A549 (cell line): ENCODE measurements at regions of chr9 and their contacts with region 1.

Region 1: DNA sequence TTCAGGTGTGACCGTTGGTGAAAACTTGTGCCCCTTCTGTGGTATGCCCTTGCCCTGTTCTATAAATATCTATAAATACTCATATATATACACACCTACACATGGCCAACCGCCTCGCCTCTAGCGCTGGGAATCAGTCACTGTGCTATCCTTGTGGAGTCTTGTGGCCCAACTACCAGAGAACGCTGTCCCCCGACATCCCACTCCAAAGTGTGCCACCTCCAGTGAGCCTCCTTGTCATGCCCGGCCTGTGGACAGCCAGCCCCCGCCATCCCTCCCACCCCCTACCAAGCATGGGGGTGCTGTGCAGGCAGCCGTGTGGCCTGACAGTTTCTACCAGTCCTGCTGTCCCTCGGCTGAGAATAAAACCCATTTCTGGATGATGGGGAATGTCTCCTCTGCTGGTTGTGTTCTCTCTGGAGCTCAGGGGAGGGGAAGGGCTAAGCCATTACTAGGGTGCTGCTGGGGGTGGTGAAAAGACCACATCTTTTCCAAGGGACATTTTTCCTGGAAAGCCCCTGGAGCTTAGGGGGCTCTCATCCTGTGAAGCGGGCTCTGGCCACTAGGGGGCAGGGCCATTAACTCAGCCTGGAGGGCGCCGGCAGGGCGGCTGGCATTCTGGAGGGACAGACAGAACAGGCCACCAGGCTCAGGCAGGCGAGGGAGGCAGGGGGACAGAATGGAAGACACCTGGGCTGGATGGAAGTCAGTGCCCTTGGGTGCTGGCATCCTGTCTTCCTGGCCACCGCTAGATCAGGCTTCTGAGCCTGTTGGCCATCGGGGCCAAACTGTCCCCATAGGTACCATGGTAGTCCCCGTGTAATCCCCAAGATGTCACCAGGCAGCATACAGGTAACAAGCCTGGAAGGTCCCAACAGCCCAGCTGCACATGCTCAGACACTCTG is 20.7 kb downstream of the GOLGA2 start:
- DNase-seq: peak; percentile 61 to 88
- ATAC-seq: peak; percentile 33 to 79; a peak in 5 of 6 replicates
- H3K4me3 ChIP-seq: no peak overlapping the region
- H3K27ac ChIP-seq: 0 out of 6 replicates have a peak overlapping the region, but pooled peaks of 1 of the 2 experiments have one; percentile 29
- H3K4me1 ChIP-seq: no peaks in the 10 kb centered on the region
- CTCF ChIP-seq: peak; percentile 75
- EP300 ChIP-seq: no peak
- POLR2A ChIP-seq: no peak
- RAD21 ChIP-seq: peak; percentile 32 to 33; a peak in 4 of 5 replicates

Region 2: GRCh38 chr9:127770905-127771569 is 484.1 kb before region 1 on chr9:
- CTCF ChIA-PET with region 1: no interaction called
- POLR2A ChIA-PET with region 1: no interaction called
- DNase-seq: peak; percentile 86 to 98
- ATAC-seq: peak; percentile 92 to 98
- H3K4me3 ChIP-seq: peak overlapping the region; percentile 40
- H3K27ac ChIP-seq: peak overlapping the region in 1 of 2 experiments; percentile 54; a peak in 2 of 6 replicates
- H3K4me1 ChIP-seq: peaks cover 4% of the 10 kb centered on the region; the same call in 1 of the 3 replicates
- CTCF ChIP-seq: no peak
- EP300 ChIP-seq: no peak
- POLR2A ChIP-seq: no peak
- RAD21 ChIP-seq: no peak

Region 3: GRCh38 chr9:128244837-128245231 is 10.3 kb before region 1 on chr9:
- CTCF ChIA-PET with region 1: interaction called, 22 read pairs
- POLR2A ChIA-PET with region 1: interaction called, 4 read pairs
- DNase-seq: no peak
- ATAC-seq: no peak
- H3K4me3 ChIP-seq: no peak overlapping the region
- H3K27ac ChIP-seq: no peak overlapping the region
- H3K4me1 ChIP-seq: no peaks in the 10 kb centered on the region
- CTCF ChIP-seq: no peak
- EP300 ChIP-seq: no peak
- POLR2A ChIP-seq: no peak
- RAD21 ChIP-seq: no peak

Region 4: DNA sequence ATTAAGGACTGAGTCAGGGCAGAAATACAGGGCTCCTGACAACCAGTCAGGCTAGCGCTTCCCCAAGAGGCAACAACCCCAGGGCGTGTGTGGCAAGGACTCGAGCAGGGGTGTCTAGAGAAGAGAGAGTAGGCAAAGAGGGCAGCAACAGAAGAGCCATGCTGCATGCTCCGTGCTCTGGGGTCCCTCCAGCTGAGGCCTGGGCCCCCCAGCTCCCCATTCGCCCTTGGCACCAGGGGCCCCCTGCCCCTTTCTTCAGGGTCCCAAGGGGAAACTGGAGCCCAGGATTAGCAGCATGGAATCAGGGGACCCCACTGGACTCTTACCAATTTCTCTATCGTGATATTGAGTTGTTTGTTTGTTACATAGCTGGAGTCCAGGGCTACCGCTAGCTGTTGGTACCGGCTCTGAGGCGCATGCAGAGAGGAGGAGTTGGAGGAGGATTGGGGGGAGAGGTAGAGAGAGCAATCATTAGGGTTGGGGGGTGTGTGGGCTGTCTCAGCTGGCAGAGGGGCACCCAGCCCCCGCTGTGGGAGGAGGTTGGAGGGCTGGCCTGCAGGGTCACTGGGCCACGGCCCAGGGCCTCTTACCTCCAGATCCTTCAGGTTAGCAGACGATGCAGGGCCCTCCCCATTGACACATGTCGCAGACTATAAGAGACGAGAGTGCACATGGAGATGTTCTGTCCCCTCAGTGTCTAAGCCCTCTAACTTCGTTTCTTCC is 11.9 kb after region 1 on chr9:
- CTCF ChIA-PET with region 1: interaction called, 37 read pairs
- POLR2A ChIA-PET with region 1: no interaction called
- DNase-seq: no peak
- ATAC-seq: no peak
- H3K4me3 ChIP-seq: no peak overlapping the region
- H3K27ac ChIP-seq: no peak overlapping the region
- H3K4me1 ChIP-seq: no peaks in the 10 kb centered on the region
- CTCF ChIP-seq: no peak
- EP300 ChIP-seq: no peak
- POLR2A ChIP-seq: no peak
- RAD21 ChIP-seq: no peak